ENCODE measurements at regions of chr20 and their contacts with region 1.

Region 1: GRCh38 chr20:60691966-60692960 is 559.8 kb upstream of the CDH4 start:
- DNase-seq: no peak
- ATAC-seq: no peak; the same call in 1 of the 2 replicates
- H3K4me3 Mint-ChIP-seq: peak overlapping the region; percentile 24
- H3K27ac Mint-ChIP-seq: peak overlapping the region; percentile 98
- H3K4me1 Mint-ChIP-seq: peaks cover 66% of the 10 kb centered on the region
- H3K27me3 Mint-ChIP-seq: peaks cover 16% of the 10 kb centered on the region
- CTCF ChIP-seq: no peak

Region 2: GRCh38 chr20:60718743-60719322 is 26.6 kb after region 1 on chr20:
- CTCF ChIA-PET with region 1: interaction called, 10 read pairs
- POLR2A ChIA-PET with region 1: no interaction called
- DNase-seq: peak; percentile 76
- ATAC-seq: peak; percentile 89
- H3K4me3 Mint-ChIP-seq: no peak overlapping the region
- H3K27ac Mint-ChIP-seq: no peak overlapping the region
- H3K4me1 Mint-ChIP-seq: peaks cover 16% of the 10 kb centered on the region
- H3K27me3 Mint-ChIP-seq: peaks cover 5% of the 10 kb centered on the region; the same call in 1 of the 2 replicates
- CTCF ChIP-seq: peak; percentile 8; the same call in 1 of the 2 replicates

Measured in WTC11 (cell line).